Ascending aorta (tissue), 2 donors: ENCODE measurements at regions of chr12 and their contacts with region 1.

Region 1: DNA sequence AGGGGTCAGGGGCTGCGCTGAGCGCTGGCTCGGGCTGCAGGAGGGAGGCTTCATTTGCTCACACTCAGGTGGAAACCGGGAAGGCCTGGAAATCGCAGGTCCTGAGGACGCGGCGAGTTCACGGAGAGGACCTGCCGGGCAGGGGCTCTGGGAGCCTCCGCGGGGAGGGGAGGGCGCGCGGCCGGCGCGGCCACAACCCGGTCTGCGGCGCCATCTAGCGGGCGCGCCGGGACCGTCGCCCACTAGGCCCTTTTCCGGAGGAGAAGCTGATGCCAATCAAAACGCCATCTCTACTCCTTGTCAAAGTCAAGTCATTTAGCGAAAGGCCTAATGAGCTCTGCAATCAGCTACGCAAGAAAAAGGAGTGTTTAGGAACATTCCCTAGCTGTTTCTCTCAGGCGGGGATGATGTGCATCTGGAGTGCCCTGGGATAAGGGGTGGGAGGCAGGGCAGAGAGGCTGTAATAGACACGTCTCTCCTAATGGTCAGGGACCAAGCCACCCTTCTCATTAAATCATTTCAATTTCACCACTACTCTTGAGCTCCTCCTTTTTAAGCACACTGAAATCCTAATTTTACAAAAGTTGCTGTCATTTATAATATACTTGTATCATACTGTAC is 885.8 kb upstream of the TMEM132C start:
- DNase-seq: peak in 1 of 2 donors; percentile 66
- H3K4me3 ChIP-seq: peak overlapping the region; percentile 37 to 39
- H3K27ac ChIP-seq: no peak overlapping the region
- H3K4me1 ChIP-seq: no peaks in the 10 kb centered on the region
- H3K27me3 ChIP-seq: no peaks in the 10 kb centered on the region
- CTCF ChIP-seq: peak; percentile 65 to 94 (median 76)

Region 2: GRCh38 chr12:127108360-127109215 is 272.6 kb before region 1 on chr12:
- intact Hi-C with region 1: loop called (anchors 1 kb)
- DNase-seq: peak in 1 of 2 donors; percentile 66
- H3K4me3 ChIP-seq: no peak overlapping the region
- H3K27ac ChIP-seq: no peak overlapping the region
- H3K4me1 ChIP-seq: no peaks in the 10 kb centered on the region
- H3K27me3 ChIP-seq: no peaks in the 10 kb centered on the region
- CTCF ChIP-seq: peak; percentile 37 to 65 (median 43)

Region 3: DNA sequence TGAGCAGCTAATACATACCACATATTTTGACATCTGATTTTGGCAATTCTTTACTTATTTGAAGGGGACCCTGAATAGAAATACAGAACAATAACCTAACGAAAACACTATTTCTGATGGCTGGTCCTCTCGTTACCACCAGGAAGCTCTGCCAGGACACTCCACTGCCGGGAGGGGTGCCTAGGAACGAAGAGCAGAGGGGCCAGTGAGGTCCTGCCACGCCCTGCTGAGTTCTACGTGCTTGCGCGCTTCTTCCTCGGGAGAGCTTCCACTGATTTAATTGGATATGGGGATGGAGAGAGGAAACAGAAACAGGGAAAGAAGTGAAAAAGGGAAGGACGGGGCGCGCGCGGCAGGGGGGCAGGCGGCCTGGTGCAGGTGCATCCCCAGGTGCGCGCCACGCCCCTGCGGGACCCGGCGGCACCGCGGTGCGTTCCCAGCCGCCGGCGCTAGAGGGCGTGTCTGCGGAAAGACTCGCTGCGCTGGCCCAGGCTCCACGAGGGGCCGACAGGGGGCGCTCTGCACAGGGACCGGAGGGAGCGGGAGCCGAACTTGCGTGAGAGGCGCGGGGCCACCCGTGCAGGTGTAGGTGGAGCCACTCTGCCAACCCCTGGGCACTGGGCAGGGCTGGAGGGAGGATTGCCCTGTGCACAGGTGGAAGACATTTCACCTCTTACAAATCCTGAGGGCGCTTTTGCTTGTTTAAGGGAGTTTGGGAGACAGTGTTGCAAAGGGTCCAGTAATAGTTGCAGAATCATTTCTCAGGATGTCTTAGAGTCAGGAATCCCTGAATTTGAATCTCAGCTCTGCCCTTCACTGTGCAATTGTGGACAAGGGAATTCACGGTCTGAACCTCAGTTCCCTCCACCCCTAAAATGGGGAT is 100.5 kb before region 1 on chr12:
- intact Hi-C with region 1: loop called (anchors 5 kb)
- DNase-seq: no peak
- H3K4me3 ChIP-seq: no peak overlapping the region
- H3K27ac ChIP-seq: no peak overlapping the region
- H3K4me1 ChIP-seq: peaks cover 4 to 6% of the 10 kb centered on the region in 2 donors
- H3K27me3 ChIP-seq: no peaks in the 10 kb centered on the region
- CTCF ChIP-seq: peak; percentile 71 to 84 (median 76)

Region 4: DNA sequence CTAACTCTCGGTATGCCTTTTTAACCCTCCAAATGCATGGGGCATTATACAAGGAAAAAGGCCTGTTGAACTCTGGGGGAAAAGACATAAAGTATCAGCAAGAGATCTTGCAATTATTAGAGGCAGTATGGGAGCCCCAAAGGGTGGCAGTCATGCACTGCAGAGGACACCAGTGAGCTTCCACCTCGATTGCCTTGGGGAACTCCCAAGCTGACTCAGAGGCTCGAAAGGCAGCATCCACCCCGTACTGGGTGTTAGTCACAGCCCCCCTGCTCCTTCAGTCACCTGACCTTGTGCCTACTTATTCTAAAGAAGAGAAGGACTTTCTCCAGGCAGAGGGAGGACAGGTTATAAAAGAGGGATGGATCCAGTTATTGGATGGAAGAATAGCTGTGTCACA is 104.4 kb after region 1 on chr12:
- intact Hi-C with region 1: no loop called
- DNase-seq: no peak
- H3K4me3 ChIP-seq: no peak overlapping the region
- H3K27ac ChIP-seq: no peak overlapping the region
- H3K4me1 ChIP-seq: no peaks in the 10 kb centered on the region
- H3K27me3 ChIP-seq: no peaks in the 10 kb centered on the region
- CTCF ChIP-seq: no peak

Region 5: GRCh38 chr12:127526925-127527324 is 145.8 kb after region 1 on chr12:
- intact Hi-C with region 1: no loop called
- DNase-seq: no peak
- H3K4me3 ChIP-seq: no peak overlapping the region
- H3K27ac ChIP-seq: no peak overlapping the region
- H3K4me1 ChIP-seq: no peaks in the 10 kb centered on the region
- H3K27me3 ChIP-seq: no peaks in the 10 kb centered on the region
- CTCF ChIP-seq: no peak